AG04450 (cell line): ENCODE measurements at regions of chr19 and their contacts with region 1.

Region 1: DNA sequence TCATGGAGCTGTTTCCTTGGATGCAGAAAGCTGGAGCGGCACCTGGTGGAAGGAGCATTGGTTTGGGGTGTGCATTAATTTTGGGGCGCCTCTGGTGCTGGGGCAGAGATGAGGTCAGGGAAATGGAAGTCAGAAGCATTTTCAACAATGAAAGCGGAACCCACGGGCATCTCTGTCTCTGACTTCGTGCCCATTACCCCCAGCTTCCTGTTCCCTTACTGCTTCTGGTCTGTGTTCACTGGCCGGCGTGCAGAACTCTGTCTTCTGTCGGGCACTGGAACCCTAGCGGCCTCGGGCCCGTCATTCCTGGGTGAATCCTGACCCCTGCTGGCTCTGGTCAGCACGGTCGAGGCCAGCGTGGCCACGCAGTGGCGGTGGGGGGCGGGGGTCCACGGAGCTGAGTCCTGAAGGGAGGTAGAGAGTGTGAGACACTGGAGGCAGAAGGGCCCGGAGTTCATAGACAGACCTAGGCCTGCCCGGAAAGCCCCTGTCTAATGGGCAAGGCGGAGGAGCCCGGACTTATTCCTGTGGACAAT is 7.9 kb upstream of the LINGO3 start:
- DNase-seq: no peak
- H3K4me3 ChIP-seq: no peak overlapping the region
- H3K27ac ChIP-seq: no peak overlapping the region
- H3K27me3 ChIP-seq: peaks cover 14% of the 10 kb centered on the region
- CTCF ChIP-seq: peak; percentile 64

Region 2: DNA sequence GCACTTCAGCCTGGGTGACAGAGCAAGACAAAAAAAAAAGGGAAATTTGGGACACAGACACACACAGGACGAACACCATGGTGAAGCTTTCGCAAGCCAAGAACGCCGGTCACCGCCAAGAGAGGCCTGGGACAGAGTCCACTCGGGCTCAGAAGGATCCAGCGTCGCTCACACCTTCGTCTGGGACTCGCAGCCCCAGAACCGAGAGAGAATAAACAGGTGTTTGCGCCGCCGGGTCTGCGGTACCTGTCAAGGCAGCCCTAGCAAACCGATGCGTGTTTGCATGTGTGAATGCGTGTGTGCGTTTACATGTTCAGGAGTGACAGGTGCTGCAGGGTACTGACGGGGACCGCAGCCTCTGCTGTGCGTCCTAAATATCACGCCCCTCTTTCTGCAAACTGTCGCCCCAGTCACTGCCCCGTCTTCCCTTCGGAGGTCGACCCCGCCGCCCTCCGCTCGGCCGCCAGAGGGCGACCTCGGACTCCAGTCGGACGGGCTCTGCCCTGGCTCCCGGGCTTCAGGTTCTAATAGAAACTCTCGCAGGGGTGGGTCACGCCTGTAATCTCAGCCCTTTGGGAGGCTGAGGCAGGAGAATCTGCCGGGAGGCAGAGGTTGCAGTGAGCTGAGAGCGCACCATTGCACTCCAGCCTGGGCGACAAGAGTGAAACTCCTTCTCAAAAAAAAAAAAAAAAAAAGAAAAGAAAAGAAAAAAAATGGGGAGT is 386.7 kb before region 1 on chr19:
- CTCF ChIA-PET with region 1: interaction called, 11 read pairs
- POLR2A ChIA-PET with region 1: no interaction called
- DNase-seq: no peak
- H3K4me3 ChIP-seq: peak overlapping the region; percentile 54
- H3K27ac ChIP-seq: no peak overlapping the region
- H3K27me3 ChIP-seq: peaks cover 2% of the 10 kb centered on the region
- CTCF ChIP-seq: peak; percentile 89

Region 3: GRCh38 chr19:2151339-2152229 is 164.3 kb before region 1 on chr19 and contains the start of gene AP3D1:
- CTCF ChIA-PET with region 1: interaction called, 36 read pairs
- POLR2A ChIA-PET with region 1: interaction called, 3 read pairs
- DNase-seq: peak; percentile 99
- H3K4me3 ChIP-seq: peak within 1 kb of the TSS; percentile 94
- H3K27ac ChIP-seq: peak within 1 kb of the TSS; percentile 77
- H3K27me3 ChIP-seq: no peaks in the 10 kb centered on the region
- CTCF ChIP-seq: no peak
- polyA plus RNA-seq, gene AP3D1: 68.2 and 94.4 TPM in 2 replicates

Region 4: GRCh38 chr19:2158535-2158934 is 157.4 kb before region 1 on chr19:
- CTCF ChIA-PET with region 1: interaction called, 36 read pairs
- POLR2A ChIA-PET with region 1: no interaction called
- DNase-seq: no peak
- H3K4me3 ChIP-seq: no peak overlapping the region
- H3K27ac ChIP-seq: no peak overlapping the region
- H3K27me3 ChIP-seq: no peaks in the 10 kb centered on the region
- CTCF ChIP-seq: no peak

Region 5: GRCh38 chr19:2239771-2240770 is 75.8 kb before region 1 on chr19:
- CTCF ChIA-PET with region 1: interaction called, 14 read pairs
- POLR2A ChIA-PET with region 1: interaction called, 4 read pairs
- DNase-seq: no peak
- H3K4me3 ChIP-seq: peak overlapping the region; percentile 60
- H3K27ac ChIP-seq: peak overlapping the region; percentile 39
- H3K27me3 ChIP-seq: no peaks in the 10 kb centered on the region
- CTCF ChIP-seq: no peak

Region 6: GRCh38 chr19:2259331-2259730 is 56.6 kb before region 1 on chr19:
- CTCF ChIA-PET with region 1: interaction called, 10 read pairs
- POLR2A ChIA-PET with region 1: no interaction called
- DNase-seq: no peak
- H3K4me3 ChIP-seq: no peak overlapping the region
- H3K27ac ChIP-seq: no peak overlapping the region
- H3K27me3 ChIP-seq: peaks cover under 1% of the 10 kb centered on the region
- CTCF ChIP-seq: no peak

Region 7: DNA sequence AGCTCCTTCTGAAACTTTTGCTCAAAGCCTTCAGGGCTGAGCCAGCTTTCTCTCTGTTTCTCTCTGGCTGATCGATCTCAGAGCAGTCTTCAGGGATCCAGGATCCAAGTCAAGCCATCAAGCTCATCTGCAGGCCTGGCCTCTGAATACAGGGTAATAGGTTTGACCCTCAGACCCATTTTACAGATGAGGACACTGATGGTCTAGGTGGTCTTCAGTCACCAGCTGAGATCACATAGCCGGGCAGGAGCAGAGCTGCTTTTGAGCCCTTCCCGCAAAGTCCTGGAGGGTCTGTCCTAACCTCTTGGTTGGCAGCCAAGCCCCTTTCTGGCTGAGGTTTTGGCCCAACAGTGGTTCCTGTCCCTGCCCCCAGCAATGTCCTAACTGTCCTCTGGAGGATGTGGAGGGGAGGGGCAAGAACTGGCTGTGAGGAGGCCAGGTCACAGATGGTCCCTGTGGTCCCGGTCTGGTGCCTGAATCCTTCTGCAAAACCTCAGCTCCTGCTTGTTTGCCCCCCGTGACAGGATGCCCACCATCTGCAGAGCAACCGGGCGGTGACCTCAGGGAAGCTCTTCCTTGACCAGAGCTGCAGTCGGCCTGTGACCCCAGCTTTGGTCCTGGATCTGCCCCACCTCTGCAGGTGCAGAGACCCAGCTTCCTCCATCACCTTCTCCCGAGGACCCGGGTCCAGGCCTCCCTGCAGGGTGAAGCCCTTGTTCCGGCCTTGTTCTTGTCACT is 28.1 kb before region 1 on chr19:
- CTCF ChIA-PET with region 1: no interaction called
- POLR2A ChIA-PET with region 1: no interaction called
- DNase-seq: no peak
- H3K4me3 ChIP-seq: no peak overlapping the region
- H3K27ac ChIP-seq: no peak overlapping the region
- H3K27me3 ChIP-seq: peaks cover 44% of the 10 kb centered on the region
- CTCF ChIP-seq: no peak